Transverse colon (tissue), 4 donors: ENCODE measurements at regions of chr10 and their contacts with region 1.

Region 1: GRCh38 chr10:69408318-69409175 is 8.2 kb downstream of the TACR2 start:
- DNase-seq: peak; percentile 97
- H3K4me3 ChIP-seq: peak overlapping the region in 3 of 4 donors; percentile 4 to 32 (median 27)
- H3K27ac ChIP-seq: peak overlapping the region; percentile 88 to 94 (median 92)
- H3K4me1 ChIP-seq: peaks cover 13 to 52% (median 24%) of the 10 kb centered on the region in 4 donors
- H3K27me3 ChIP-seq: no peaks in the 10 kb centered on the region
- CTCF ChIP-seq: peak; percentile 71 to 87 (median 74)
- EP300 ChIP-seq: no peak
- POLR2A ChIP-seq: peak; percentile 33

Region 2: GRCh38 chr10:69506834-69507721 is 98.5 kb after region 1 on chr10:
- in situ Hi-C with region 1: loop called in 2 of 4 experiments (anchors 10 kb)
- intact Hi-C with region 1: no loop called
- DNase-seq: no peak
- H3K4me3 ChIP-seq: peak overlapping the region in 1 of 4 donors; percentile 28
- H3K27ac ChIP-seq: peak overlapping the region; percentile 56 to 72 (median 62)
- H3K4me1 ChIP-seq: peaks cover 3 to 12% (median 7%) of the 10 kb centered on the region in 4 donors
- H3K27me3 ChIP-seq: no peaks in the 10 kb centered on the region
- CTCF ChIP-seq: no peak
- EP300 ChIP-seq: no peak
- POLR2A ChIP-seq: no peak

Region 3: DNA sequence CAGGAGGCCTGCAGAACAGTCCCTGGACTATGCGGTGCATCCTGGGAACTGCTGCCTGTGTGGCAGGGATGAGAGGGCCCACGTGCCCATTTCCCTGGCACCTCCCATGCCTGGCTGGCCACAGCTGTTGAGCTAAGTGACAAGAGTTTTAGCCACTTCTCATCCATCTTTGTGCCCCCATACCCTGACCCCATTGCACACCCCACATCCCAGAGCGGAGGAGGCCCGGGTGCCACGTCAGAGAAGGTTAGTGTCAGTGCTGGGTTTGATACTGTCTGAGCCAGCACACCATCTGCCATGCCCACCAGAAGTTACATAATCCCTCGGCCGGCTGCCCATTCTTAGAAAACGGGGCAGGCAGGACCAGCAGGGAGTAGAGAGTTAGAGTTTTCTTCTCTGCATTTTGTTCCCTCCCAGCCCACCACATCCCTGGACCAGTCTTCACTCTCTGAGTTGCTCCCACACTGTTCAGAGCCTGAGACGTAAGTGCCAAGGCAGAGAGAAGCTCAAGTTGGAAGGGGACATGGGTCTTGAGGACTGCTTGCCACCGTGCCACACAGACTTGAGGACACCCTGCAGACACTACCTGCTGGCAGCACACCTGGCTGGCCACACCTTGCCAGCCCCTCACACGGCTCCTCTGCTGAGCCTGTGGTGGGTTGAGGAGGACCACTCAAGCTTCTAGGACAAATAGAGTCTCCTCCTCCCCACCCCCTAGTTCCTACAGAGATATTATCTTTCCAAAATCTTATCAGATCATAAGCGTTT is 1816.9 kb after region 1 on chr10:
- in situ Hi-C with region 1: no loop called
- intact Hi-C with region 1: loop called (anchors 5 kb)
- DNase-seq: no peak
- H3K4me3 ChIP-seq: no peak overlapping the region
- H3K27ac ChIP-seq: no peak overlapping the region
- H3K4me1 ChIP-seq: peaks cover 0 to 8% (median 0%) of the 10 kb centered on the region in 4 donors
- H3K27me3 ChIP-seq: no peaks in the 10 kb centered on the region
- CTCF ChIP-seq: no peak
- EP300 ChIP-seq: no peak
- POLR2A ChIP-seq: no peak